Activated naive CD4-positive, alpha-beta T cell treated with anti-CD3 and anti-CD28 coated beads, Interleukin-2, amount 10 ng/mL, durations not matched to agents 7 days and 5 days (primary cell): ENCODE measurements at regions of chr4 and their contacts with region 1.

Region 1: GRCh38 chr4:48557478-48557877 is 67.4 kb downstream of the ZAR1 start:
- DNase-seq: no peak
- H3K4me3 Mint-ChIP-seq: no peak overlapping the region
- H3K27ac Mint-ChIP-seq: no peak overlapping the region
- H3K4me1 Mint-ChIP-seq: no peaks in the 10 kb centered on the region
- H3K27me3 Mint-ChIP-seq: no peaks in the 10 kb centered on the region

Region 2: GRCh38 chr4:48546336-48546735 is 11.1 kb before region 1 on chr4:
- CTCF ChIA-PET with region 1: interaction called, 10 read pairs
- DNase-seq: peak; percentile 62
- H3K4me3 Mint-ChIP-seq: no peak overlapping the region
- H3K27ac Mint-ChIP-seq: no peak overlapping the region
- H3K4me1 Mint-ChIP-seq: no peaks in the 10 kb centered on the region
- H3K27me3 Mint-ChIP-seq: no peaks in the 10 kb centered on the region